ENCODE measurements at regions of chr19 and their contacts with region 1.

Region 1: GRCh38 chr19:7903244-7904073 is at the start of gene MAP2K7:
- DNase-seq: peak; percentile 99 to 100
- H3K4me3 ChIP-seq: peak within 1 kb of the TSS; percentile 85 to 89 (median 87)
- H3K27ac ChIP-seq: peak within 1 kb of the TSS; percentile 92 to 94
- H3K4me1 ChIP-seq: peaks cover 14 to 18% of the 10 kb centered on the region in 2 donors
- H3K27me3 ChIP-seq: no peaks in the 10 kb centered on the region
- CTCF ChIP-seq: peak; percentile 42 to 54 (median 50)
- POLR2A ChIP-seq: peak; percentile 63
- total RNA-seq, gene MAP2K7: 13.3 to 17.1 (median 13.8) TPM

Region 2: GRCh38 chr19:7852851-7853769 is 50.3 kb before region 1 on chr19:
- intact Hi-C with region 1: loop called (anchors 5 kb)
- DNase-seq: peak; percentile 59 to 74
- H3K4me3 ChIP-seq: no peak overlapping the region
- H3K27ac ChIP-seq: no peak overlapping the region
- H3K4me1 ChIP-seq: peaks cover 0 to 5% of the 10 kb centered on the region in 2 donors
- H3K27me3 ChIP-seq: no peaks in the 10 kb centered on the region
- CTCF ChIP-seq: peak; percentile 58 to 83 (median 64)
- POLR2A ChIP-seq: no peak

Region 3: GRCh38 chr19:7866399-7867091 is 36.9 kb before region 1 on chr19:
- intact Hi-C with region 1: loop called (anchors 1 kb)
- DNase-seq: no peak
- H3K4me3 ChIP-seq: no peak overlapping the region
- H3K27ac ChIP-seq: no peak overlapping the region
- H3K4me1 ChIP-seq: peaks cover 0 to 5% of the 10 kb centered on the region in 2 donors
- H3K27me3 ChIP-seq: no peaks in the 10 kb centered on the region
- CTCF ChIP-seq: no peak
- POLR2A ChIP-seq: no peak

Region 4: DNA sequence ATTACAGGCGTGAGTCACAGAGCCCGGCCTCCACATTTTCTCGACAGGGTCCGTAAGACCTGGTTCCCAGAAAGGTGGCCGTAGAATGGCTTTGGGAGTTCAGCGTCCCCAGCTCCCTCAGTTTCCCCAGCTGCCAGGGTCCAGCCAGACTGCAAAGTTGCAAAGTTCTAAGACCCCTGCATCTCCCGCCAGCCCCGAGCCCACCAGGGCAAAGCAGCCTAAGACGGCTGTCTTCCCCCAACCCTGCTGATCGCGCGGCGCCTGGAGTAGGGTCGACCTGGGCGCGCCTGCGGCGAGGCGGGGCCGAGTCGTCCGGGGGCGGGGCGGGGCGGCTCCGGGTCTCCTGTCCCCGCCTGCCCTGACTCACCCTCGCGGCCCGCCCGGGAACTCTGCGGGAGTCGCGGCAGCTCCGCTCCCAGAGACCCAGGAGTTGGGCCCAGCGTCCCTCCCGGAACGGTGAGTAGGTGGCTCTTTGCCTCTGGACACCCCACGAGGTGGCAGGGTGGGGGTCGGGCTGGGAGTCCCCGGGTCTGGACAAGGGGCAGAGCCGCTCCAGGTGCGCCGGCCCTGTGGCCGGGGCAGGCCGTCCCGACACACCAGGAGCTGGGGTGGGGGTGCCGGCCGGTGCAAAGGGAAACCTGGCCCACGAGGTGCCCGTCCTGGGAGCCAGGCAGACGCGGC is 15.2 kb before region 1 on chr19 and contains the start of gene LRRC8E:
- intact Hi-C with region 1: no loop called
- DNase-seq: peak in 1 of 2 donors; percentile 74
- H3K4me3 ChIP-seq: peak within 1 kb of the TSS; percentile 44 to 79 (median 64)
- H3K27ac ChIP-seq: peak within 1 kb of the TSS; percentile 71 to 84
- H3K4me1 ChIP-seq: peaks cover 0 to 2% of the 10 kb centered on the region in 2 donors
- H3K27me3 ChIP-seq: no peaks in the 10 kb centered on the region
- CTCF ChIP-seq: no peak
- POLR2A ChIP-seq: no peak
- total RNA-seq, gene LRRC8E: 1.4 to 15.1 (median 6.6) TPM

Region 5: GRCh38 chr19:7953060-7953459 is 49.6 kb after region 1 on chr19:
- intact Hi-C with region 1: no loop called
- DNase-seq: no peak
- H3K4me3 ChIP-seq: no peak overlapping the region
- H3K27ac ChIP-seq: peak overlapping the region in 1 of 2 donors; percentile 26
- H3K4me1 ChIP-seq: no peaks in the 10 kb centered on the region
- H3K27me3 ChIP-seq: no peaks in the 10 kb centered on the region
- CTCF ChIP-seq: no peak
- POLR2A ChIP-seq: no peak